AG04450 (cell line): ENCODE measurements at regions of chr1 and their contacts with region 1.

Region 1: GRCh38 chr1:209565759-209566678 is 17.5 kb upstream of the CAMK1G start:
- DNase-seq: peak; percentile 45
- H3K4me3 ChIP-seq: no peak overlapping the region
- H3K27ac ChIP-seq: no peak overlapping the region
- H3K27me3 ChIP-seq: peaks cover 12% of the 10 kb centered on the region
- CTCF ChIP-seq: peak; percentile 68

Region 2: DNA sequence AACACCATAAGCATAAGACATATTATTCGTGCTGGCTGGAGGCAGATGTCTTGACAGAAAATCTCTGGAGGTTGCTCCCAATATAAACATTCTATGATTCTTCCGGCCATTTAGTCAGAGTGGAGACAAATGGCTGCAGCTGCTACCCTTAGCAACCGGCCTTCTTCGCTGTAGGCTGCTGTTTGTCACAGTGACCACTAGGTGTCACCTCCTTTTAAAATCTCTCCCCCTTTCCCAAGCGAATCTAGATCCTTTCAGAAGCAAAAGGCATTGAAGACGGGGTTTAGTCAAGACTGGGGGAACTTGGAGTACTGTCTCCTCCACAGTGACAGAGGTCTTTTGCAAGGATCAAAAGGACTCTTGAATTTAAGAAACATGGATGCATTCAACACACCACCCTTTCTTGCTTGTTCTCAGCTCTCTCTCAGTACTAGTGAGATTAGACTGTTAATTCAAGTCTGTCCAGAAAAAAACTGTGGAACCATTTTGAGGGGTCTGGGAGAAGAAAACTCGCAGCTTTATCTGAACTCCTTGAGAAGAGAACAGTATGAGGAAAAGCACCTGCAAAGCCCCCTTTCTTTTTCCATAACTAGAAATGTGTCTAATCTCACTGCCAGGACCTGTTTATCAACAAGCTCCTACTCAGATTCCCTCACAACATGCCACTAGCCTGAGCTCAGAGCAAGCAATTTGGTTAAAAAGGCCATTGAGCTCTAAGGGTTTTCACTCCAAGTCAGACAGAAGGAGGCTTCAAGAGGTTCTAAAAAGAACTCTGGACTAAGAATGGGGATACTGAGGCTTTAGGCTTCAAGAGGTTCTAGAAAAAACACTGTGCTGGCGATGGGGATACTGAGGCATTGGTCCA is 913.5 kb before region 1 on chr1:
- CTCF ChIA-PET with region 1: interaction called, 10 read pairs
- POLR2A ChIA-PET with region 1: no interaction called
- DNase-seq: peak; percentile 32
- H3K4me3 ChIP-seq: no peak overlapping the region
- H3K27ac ChIP-seq: no peak overlapping the region
- H3K27me3 ChIP-seq: no peaks in the 10 kb centered on the region
- CTCF ChIP-seq: peak; percentile 85

Region 3: DNA sequence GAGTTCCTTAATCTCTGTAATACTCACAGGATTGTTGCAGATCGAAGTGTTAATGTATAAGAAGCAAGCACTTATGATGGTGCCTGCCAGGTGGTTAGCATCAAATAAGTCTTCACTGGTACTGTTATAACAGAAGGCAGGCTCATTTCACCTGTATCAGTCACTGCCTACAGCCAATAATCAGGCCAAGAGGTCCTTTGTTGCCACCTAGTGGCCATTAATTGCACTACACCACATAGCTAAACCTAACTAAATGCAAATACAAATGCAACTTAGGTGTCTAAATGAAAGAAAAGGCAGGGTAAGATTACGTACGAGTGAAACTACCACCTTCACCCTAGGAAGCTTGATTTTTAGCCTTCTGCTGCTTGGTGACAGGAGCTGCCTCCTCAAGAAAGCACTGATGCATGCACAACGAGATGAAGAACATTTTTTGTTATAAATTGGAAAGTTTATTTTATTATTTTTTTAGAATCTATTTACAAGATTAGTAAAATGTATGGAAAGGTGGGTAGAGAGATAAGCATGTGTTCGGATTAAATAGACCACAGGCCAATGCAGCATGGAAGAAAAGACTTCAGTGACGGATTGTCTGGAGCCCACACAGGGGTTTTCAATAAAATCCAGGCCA is 317.3 kb before region 1 on chr1:
- CTCF ChIA-PET with region 1: interaction called, 19 read pairs
- POLR2A ChIA-PET with region 1: no interaction called
- DNase-seq: peak; percentile 16
- H3K4me3 ChIP-seq: no peak overlapping the region
- H3K27ac ChIP-seq: no peak overlapping the region
- H3K27me3 ChIP-seq: no peaks in the 10 kb centered on the region
- CTCF ChIP-seq: peak; percentile 89

Region 4: DNA sequence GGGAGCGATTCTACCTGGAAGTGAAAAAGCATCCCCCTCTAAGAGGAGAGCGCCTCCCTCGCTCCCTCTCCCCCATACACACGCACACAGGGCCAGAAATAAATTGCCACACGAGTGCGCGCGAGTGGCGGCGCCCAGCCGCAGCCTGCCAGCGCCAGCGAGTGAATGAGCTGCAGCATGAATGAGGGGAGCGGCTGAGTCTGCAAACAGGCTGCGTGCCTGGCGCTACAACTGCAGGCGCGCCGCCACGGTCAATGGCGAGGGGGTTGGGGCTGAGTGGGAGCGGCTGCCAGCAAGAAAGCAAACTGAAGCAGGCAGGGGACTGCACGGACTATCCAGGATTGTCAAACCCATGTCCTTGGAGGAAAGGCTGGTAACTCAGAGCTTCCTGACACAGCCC is 19.7 kb after region 1 on chr1:
- CTCF ChIA-PET with region 1: interaction called, 34 read pairs
- POLR2A ChIA-PET with region 1: no interaction called
- DNase-seq: no peak
- H3K4me3 ChIP-seq: peak overlapping the region; percentile 42
- H3K27ac ChIP-seq: no peak overlapping the region
- H3K27me3 ChIP-seq: peaks cover 2% of the 10 kb centered on the region
- CTCF ChIP-seq: no peak

Region 5: DNA sequence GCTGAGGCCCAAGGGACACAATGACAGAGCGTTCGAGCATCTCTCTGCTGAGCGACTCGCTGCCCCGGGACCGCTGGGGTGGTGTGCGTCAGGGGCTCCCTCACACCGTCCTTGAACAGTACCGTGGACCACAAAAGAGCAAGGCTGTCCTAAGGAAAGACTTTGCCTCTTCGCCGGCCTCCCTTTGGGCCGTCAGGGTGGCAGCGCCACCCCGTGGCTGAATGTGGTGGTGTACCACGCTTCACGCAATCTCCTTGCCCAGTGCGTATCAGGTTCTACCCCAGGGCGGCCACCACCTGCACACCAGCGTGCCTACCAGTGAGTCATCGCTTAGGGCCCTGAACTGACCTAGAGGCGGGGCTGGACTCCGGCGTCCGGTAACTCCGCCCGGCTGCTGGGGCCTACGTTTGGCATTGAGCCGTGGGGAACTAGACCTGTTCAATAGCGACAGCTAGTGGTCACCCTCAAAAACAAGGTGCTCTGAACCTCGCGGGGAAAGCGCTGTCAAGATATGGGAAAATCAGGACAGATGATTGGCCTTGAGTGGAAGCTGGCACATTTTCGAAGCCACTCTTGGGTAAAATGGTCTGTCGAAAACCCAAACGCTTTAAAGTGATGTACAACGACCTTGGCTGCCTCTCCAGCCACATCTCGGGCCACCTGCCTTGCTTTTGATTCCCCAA is 181.7 kb after region 1 on chr1:
- CTCF ChIA-PET with region 1: interaction called, 29 read pairs
- POLR2A ChIA-PET with region 1: no interaction called
- DNase-seq: peak; percentile 76
- H3K4me3 ChIP-seq: peak overlapping the region; percentile 39
- H3K27ac ChIP-seq: no peak overlapping the region
- H3K27me3 ChIP-seq: no peaks in the 10 kb centered on the region
- CTCF ChIP-seq: peak; percentile 79